Activated naive CD4-positive, alpha-beta T cell treated with anti-CD3 and anti-CD28 coated beads for 36 hours (primary cell): ENCODE measurements at regions of chr1 and their contacts with region 1.

Region 1: DNA sequence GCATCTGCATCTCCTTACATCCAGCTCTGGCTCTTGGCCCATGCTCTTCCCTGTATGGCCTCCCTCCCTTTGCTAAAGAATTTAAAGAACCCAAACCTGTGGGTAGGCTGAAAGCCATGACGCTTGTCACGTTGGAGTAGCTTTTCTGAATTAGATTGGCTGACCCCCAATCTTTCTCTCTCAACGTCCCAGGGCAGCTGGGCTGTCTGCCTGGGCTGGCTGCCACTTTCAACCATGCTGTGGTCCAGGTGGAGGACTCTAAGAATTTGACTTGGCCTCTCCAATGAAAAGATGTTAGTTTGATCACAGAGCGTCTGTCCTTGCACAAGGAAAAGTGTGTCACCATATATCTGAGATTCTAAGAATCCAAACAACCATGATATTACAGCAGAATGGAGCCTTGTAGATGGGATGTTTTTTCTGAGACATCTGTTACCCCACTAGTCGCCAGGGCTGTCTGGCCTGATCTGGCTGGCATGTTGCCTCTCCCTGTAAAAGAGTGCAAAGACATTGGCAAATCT is 6.5 kb upstream of the IGSF3 start:
- DNase-seq: no peak
- H3K4me3 Mint-ChIP-seq: no peak overlapping the region
- H3K27ac Mint-ChIP-seq: no peak overlapping the region
- H3K4me1 Mint-ChIP-seq: no peaks in the 10 kb centered on the region
- H3K27me3 Mint-ChIP-seq: peaks cover 18% of the 10 kb centered on the region

Region 2: GRCh38 chr1:116661633-116662032 is 12.4 kb before region 1 on chr1:
- CTCF ChIA-PET with region 1: interaction called, 19 read pairs
- intact Hi-C with region 1: no loop called
- DNase-seq: no peak
- H3K4me3 Mint-ChIP-seq: no peak overlapping the region
- H3K27ac Mint-ChIP-seq: no peak overlapping the region
- H3K4me1 Mint-ChIP-seq: peaks cover 1% of the 10 kb centered on the region
- H3K27me3 Mint-ChIP-seq: peaks cover 30% of the 10 kb centered on the region

Region 3: DNA sequence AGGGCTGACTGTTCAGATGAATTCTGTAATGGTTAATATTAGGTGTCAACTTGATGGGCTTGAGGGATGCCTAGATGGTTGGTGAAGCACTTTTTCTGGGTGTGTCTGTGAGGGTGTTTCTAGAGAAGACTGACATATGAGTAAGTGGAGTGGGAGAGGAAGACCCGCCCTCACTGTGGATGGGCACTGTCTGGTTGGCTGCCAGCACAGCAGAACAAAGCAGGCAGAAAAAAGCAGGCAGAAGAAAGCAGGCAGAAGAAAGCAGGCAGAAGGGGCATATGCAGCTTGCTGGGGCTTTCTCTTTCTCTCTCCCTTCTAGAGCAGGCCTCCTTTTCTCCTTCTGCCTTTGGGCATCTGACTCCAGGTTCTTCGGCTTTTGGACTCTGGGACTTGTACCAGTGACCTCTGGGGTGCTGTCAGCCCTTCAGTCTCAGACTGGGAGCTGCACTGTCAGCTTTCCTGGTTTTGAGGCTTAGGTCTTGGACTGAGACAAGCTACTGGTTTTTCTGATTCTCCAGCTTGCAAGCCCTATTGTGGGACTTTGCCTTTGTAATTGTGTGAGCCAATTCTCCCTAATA is 37.3 kb after region 1 on chr1:
- CTCF ChIA-PET with region 1: no interaction called
- intact Hi-C with region 1: no loop called
- DNase-seq: peak; percentile 41
- H3K4me3 Mint-ChIP-seq: no peak overlapping the region
- H3K27ac Mint-ChIP-seq: no peak overlapping the region
- H3K4me1 Mint-ChIP-seq: peaks cover 13% of the 10 kb centered on the region
- H3K27me3 Mint-ChIP-seq: peaks cover 2% of the 10 kb centered on the region

Region 4: GRCh38 chr1:117685936-117686806 is 1012.1 kb after region 1 on chr1:
- CTCF ChIA-PET with region 1: no interaction called
- intact Hi-C with region 1: no loop called
- DNase-seq: no peak
- H3K4me3 Mint-ChIP-seq: no peak overlapping the region
- H3K27ac Mint-ChIP-seq: no peak overlapping the region
- H3K4me1 Mint-ChIP-seq: no peaks in the 10 kb centered on the region
- H3K27me3 Mint-ChIP-seq: peaks cover 8% of the 10 kb centered on the region